PC-9 (cell line): ENCODE measurements at regions of chr9 and their contacts with region 1.

Region 1: GRCh38 chr9:113150670-113151611 is at the start of gene SLC31A2:
- DNase-seq: peak; percentile 72 to 93
- H3K4me3 ChIP-seq: peak within 1 kb of the TSS; percentile 77
- H3K27ac ChIP-seq: no peak within 1 kb of the TSS
- H3K4me1 ChIP-seq: peaks cover 31% of the 10 kb centered on the region
- H3K27me3 ChIP-seq: no peaks in the 10 kb centered on the region
- CTCF ChIP-seq: no peak; the same call in 1 of the 2 replicates
- total RNA-seq, gene SLC31A2: 15.1 and 16.5 TPM in 2 replicates

Region 2: GRCh38 chr9:113137798-113138160 is 13.2 kb before region 1 on chr9:
- CTCF ChIA-PET with region 1: interaction called, 4 read pairs
- POLR2A ChIA-PET with region 1: no interaction called
- intact Hi-C with region 1: loop called (anchors 1 kb)
- DNase-seq: peak in 1 of 2 experiments; percentile 56
- H3K4me3 ChIP-seq: peak overlapping the region; percentile 11; the same call in 1 of the 2 replicates
- H3K27ac ChIP-seq: peak overlapping the region; percentile 12
- H3K4me1 ChIP-seq: peaks cover 23% of the 10 kb centered on the region
- H3K27me3 ChIP-seq: no peaks in the 10 kb centered on the region
- CTCF ChIP-seq: no peak

Region 3: GRCh38 chr9:113221003-113221799 is 70.3 kb after region 1 on chr9 and contains the starts of genes FKBP15 and SLC31A1:
- CTCF ChIA-PET with region 1: no interaction called
- POLR2A ChIA-PET with region 1: interaction called, 6 read pairs
- intact Hi-C with region 1: loop called (anchors 2 kb)
- DNase-seq: peak; percentile 95 to 99
- H3K4me3 ChIP-seq: peak within 1 kb of the TSS; percentile 79
- H3K27ac ChIP-seq: peak within 1 kb of the TSS; percentile 51
- H3K4me1 ChIP-seq: peaks cover 29% of the 10 kb centered on the region
- H3K27me3 ChIP-seq: no peaks in the 10 kb centered on the region
- CTCF ChIP-seq: no peak
- total RNA-seq, gene FKBP15: 23.3 and 33.5 TPM in 2 replicates
- total RNA-seq, gene SLC31A1: 24.9 and 27.2 TPM in 2 replicates